ENCODE measurements at regions of chr7 and their contacts with region 1.

Region 1: GRCh38 chr7:50467817-50468610 is 17.9 kb upstream of the FIGNL1 start:
- DNase-seq: peak; percentile 83
- H3K4me3 ChIP-seq: peak overlapping the region in 1 of 4 donors; percentile 22
- H3K27ac ChIP-seq: no peak overlapping the region
- H3K4me1 ChIP-seq: peaks cover 0 to 6% (median 6%) of the 10 kb centered on the region in 4 donors
- H3K27me3 ChIP-seq: no peaks in the 10 kb centered on the region
- CTCF ChIP-seq: peak; percentile 85 to 90 (median 88)
- EP300 ChIP-seq: no peak
- POLR2A ChIP-seq: no peak

Region 2: DNA sequence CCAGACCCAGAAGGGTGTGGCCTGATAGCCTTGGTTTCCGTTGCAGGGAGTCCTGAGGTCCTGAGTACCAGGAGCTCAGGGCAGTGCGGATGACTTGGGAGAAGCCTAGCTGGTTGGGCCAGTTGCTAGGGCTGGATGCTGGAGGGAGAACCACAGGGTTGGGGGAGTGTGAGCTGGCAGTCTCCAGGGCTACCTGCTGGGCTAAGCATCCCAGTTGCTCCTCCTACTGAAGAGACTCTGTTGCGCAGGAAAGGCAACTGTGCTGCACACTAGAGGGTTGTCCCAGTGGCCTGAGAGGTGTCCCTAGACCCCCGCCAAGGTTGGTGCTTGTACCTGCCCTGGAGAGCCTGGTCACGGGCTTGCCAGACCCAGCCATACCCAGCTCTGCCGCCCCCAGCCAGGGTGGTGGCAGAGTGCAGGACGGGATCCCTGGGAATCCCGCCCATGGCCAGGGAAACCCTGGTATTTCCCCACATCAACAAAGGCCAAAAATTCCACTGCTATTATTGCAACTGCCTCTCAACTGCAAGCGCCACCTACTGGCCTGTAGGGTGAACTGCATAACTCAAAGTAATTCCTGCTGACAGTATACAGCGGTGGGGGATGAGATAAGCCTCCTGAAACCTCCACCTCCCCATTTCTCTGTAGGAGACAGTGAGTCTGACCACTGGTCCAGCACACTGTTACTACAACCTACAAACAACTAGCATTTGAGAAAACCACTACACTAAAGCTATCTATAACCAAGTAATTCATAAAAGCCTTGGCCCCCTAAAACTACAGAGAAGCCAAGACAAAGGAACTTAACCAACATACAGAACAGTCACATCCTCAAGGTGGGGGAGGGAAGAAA is 164.8 kb after region 1 on chr7:
- in situ Hi-C with region 1: loop called in 1 of 4 experiments (anchors 25 kb)
- intact Hi-C with region 1: no loop called
- DNase-seq: peak; percentile 59
- H3K4me3 ChIP-seq: no peak overlapping the region
- H3K27ac ChIP-seq: no peak overlapping the region
- H3K4me1 ChIP-seq: peaks cover 0 to 16% (median 1%) of the 10 kb centered on the region in 4 donors
- H3K27me3 ChIP-seq: no peaks in the 10 kb centered on the region
- CTCF ChIP-seq: peak; percentile 75 to 89 (median 85)
- EP300 ChIP-seq: no peak
- POLR2A ChIP-seq: no peak

Region 3: DNA sequence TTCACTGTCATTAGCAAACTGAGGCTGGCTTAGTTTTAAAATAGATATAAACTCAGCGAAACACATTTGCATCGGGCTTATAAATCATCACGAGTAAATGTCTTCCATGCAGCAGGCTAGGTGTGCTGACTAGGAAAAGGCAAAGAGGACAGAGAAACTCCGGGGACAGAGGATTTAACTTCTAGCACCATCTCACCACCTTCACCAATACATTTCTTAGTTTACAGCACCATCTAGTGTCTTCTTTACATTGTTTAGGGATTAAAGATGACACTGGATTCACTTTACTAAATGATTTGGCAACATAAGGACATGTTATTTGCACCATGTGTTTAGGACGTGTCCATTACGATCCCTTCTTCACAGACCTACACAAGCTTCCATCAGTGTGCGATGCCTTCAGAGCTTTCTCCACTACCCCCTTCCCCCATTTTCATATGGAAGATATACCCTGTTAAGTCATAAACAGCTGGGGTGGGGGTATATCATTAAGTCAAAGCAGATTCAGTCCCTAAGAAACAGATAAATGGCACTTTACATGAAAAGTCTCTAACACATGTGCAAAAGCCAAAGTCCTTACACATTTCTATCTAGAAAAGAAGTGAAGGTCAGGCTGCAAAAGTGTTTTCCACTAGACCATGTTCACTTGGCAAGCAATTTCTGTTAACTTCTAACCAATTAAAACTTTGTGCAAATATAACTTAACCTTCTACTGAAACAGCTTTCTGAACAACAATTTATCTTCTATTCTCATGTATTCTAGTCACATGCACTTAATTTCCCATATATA is 211.4 kb after region 1 on chr7:
- in situ Hi-C with region 1: loop called in 3 of 4 experiments (anchors 5 to 25 kb)
- intact Hi-C with region 1: loop called (anchors 2 kb)
- DNase-seq: no peak
- H3K4me3 ChIP-seq: no peak overlapping the region
- H3K27ac ChIP-seq: peak overlapping the region in 2 of 4 donors; percentile 0 to 8
- H3K4me1 ChIP-seq: peaks cover 9 to 44% (median 19%) of the 10 kb centered on the region in 4 donors
- H3K27me3 ChIP-seq: no peaks in the 10 kb centered on the region
- CTCF ChIP-seq: peak; percentile 31 to 50 (median 40)
- EP300 ChIP-seq: no peak
- POLR2A ChIP-seq: no peak

Region 4: GRCh38 chr7:51141451-51142003 is 673.5 kb after region 1 on chr7:
- in situ Hi-C with region 1: loop called in 1 of 4 experiments (anchors 25 kb)
- intact Hi-C with region 1: loop called (anchors 5 kb)
- DNase-seq: no peak
- H3K4me3 ChIP-seq: no peak overlapping the region
- H3K27ac ChIP-seq: no peak overlapping the region
- H3K4me1 ChIP-seq: peaks cover 0 to 4% (median 0%) of the 10 kb centered on the region in 4 donors
- H3K27me3 ChIP-seq: no peaks in the 10 kb centered on the region
- CTCF ChIP-seq: peak in 3 of 5 experiments; percentile 33 to 45 (median 36)
- EP300 ChIP-seq: no peak
- POLR2A ChIP-seq: no peak